PC-3 (cell line): ENCODE measurements at regions of chr7 and their contacts with region 1.

Region 1: DNA sequence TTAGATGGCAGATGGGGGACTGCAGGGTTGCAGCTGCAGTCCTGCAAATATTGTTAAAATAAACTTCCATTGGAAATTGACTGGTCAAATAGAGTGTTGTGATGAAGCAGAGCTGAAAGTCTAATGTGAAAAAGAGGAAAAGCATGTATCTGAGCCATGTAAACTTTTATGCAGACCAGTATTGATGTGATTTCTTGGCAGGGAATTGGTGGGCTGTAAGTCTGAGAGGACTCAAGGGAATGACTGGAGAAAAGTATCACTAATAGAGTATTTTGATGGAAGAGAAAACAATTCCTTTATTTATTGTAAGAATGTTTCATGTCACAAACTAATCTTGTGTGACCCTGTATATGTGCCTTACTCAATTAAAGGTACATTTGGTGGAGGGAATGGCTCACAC is 155.5 kb downstream of the PPP1R9A start:
- DNase-seq: no peak
- ATAC-seq: no peak
- H3K4me3 ChIP-seq: no peak overlapping the region
- H3K27ac ChIP-seq: no peak overlapping the region
- H3K4me1 ChIP-seq: peaks cover 13% of the 10 kb centered on the region
- H3K27me3 ChIP-seq: no peaks in the 10 kb centered on the region
- CTCF ChIP-seq: no peak

Region 2: DNA sequence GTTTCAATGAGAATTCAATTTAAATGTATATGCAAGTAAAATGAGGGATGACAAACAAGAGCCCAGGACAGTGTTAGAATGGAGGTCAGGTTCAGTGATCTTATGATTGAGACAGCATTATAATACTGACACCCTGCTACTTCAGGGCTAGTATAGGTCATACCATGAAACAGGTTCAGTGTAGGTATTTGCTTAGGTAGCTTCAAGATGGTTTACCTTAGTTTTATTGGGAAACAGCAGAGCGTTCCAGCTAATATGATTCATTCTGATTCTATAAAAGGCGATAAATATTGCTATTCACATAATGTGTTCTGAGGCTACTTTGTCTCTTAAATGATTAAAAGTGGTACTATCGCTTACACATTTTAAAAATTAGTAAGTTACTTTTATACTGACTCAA is 47.8 kb after region 1 on chr7:
- CTCF ChIA-PET with region 1: no interaction called
- POLR2A ChIA-PET with region 1: interaction called, 17 read pairs
- intact Hi-C with region 1: no loop called
- DNase-seq: peak; percentile 71
- ATAC-seq: peak; percentile 99
- H3K4me3 ChIP-seq: no peak overlapping the region
- H3K27ac ChIP-seq: peak overlapping the region; percentile 35; the same call in 1 of the 2 replicates
- H3K4me1 ChIP-seq: peaks cover 10% of the 10 kb centered on the region
- H3K27me3 ChIP-seq: no peaks in the 10 kb centered on the region
- CTCF ChIP-seq: no peak

Region 3: DNA sequence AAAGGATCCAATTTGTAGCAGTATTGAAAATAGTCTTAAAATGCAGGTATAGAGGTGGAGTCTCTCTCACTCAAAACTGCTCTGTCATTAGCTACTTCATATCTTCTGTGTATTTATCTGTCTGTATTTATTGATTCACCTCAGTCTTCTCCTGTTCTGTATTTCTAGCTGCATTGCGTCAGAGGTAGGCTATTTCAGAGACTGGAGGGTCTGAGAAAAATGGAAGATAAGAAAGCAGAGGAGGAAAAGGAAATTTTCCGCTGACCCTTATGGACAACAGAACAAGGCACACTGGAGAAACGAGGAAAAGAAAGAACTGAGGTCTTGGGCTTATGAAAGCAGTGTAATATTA is 201.7 kb after region 1 on chr7:
- CTCF ChIA-PET with region 1: no interaction called
- POLR2A ChIA-PET with region 1: no interaction called
- intact Hi-C with region 1: no loop called
- DNase-seq: no peak
- ATAC-seq: no peak
- H3K4me3 ChIP-seq: no peak overlapping the region
- H3K27ac ChIP-seq: peak overlapping the region; percentile 85
- H3K4me1 ChIP-seq: peaks cover 39% of the 10 kb centered on the region
- H3K27me3 ChIP-seq: no peaks in the 10 kb centered on the region
- CTCF ChIP-seq: no peak